Cardiac septum (tissue), 1 donor: ENCODE measurements at regions of chr2 and their contacts with region 1.

Region 1: DNA sequence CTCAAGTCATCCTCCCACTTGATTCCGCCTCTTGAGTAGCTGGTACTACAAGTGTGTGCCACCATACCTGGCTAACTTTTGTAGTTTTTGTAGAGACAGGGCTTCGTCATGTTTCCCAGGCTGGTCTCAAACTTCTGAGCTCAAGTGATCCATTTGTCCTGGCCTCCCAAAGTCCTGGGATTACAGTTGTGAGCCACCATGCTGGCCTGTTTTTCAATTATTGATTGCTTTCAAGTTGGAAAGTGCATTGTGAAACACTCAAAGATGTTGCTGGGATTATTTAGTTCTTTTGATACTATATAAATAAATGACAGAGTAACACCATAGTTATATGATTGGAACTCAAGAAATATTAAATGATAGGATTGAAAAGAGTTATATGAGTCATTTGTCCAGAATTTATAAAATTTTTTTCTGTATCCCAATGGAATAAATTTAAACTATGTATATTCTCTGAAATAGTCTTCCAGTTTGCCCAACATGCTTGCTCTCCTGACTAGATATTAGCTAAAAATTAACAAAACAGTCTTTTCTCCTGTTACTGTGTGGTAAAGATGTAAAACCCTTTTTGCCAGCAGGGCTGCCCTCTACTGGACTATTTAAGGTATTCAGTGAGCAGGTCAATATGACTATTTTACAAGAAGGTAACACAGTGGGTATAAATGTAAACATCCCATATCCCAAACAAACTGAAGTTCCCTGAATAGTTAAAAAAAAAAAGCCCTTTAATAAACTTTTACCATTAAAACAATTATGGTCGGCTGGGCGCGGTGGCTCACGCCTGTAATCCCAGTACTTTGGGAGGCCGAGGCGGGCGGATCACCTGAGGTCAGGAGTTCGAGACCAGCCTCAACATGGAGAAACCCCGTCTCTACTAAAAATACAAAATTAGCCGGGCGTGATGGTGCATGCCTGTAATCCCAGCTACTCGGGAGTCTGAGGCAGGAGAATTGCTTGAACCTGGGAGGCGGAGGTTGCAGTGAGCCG is 42.7 kb downstream of the ACSL3 start:
- DNase-seq: no peak

Region 2: GRCh38 chr2:222690564-222691200 is 212.8 kb before region 1 on chr2:
- intact Hi-C with region 1: loop called (anchors 5 kb)
- DNase-seq: no peak

Region 3: DNA sequence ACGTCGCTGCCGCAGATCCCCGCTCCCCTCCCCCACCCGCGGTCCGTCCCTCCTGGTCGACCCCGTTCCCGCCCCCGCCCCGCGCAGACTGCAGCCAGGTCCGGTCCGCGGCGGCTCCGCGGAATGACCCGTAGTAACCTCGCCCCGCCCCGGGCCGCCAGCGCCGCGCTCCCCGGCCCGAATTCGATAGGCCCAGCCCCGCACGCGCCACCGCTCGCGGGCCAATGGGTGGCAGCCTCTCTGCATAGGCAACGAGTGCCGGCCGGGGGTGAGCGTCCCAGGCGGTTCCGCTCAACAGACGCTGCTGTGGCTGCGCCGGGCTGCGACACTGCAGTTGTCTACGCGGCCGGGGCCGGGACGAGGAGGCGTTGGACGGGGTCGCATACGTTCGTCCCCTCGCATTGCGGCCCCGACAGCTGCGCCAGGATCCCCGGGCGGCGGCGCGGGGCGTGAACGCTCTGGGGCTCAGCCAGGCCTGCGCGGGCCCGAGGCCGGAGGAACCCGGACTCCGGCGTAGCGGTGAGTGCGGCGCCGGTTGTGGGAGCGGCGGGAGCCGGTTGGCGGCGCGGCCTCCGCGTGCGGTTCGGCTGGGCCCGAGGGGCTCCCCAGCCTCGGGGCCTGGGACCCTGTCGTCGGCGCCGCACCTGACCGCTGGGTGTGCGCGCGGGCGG is 42.7 kb before region 1 on chr2 and contains the start of gene ACSL3:
- intact Hi-C with region 1: loop called (anchors 2 kb)
- DNase-seq: peak; percentile 99
- total RNA-seq, gene ACSL3: 37.4 TPM

Region 4: GRCh38 chr2:223469270-223470046 is 565.9 kb after region 1 on chr2:
- intact Hi-C with region 1: no loop called
- DNase-seq: peak; percentile 81